Activated T-helper 1 cell treated with anti-CD3 and anti-CD28 coated beads, Interleukin-12 subunit alpha, Interleukin-12 subunit beta, Interleukin-2, Interleukin-4 antibody, amounts not matched to agents 30 ng/mL and 10 ng/mL and 1 ng/mL, durations not matched to agents 14 hours and 24 hours and 36 hours (primary cell): ENCODE measurements at regions of chr1 and their contacts with region 1.

Region 1: GRCh38 chr1:167803358-167804207 is 81.8 kb downstream of the MPZL1 start:
- DNase-seq: peak; percentile 84
- H3K4me3 Mint-ChIP-seq: peak overlapping the region; percentile 58
- H3K27ac Mint-ChIP-seq: peak overlapping the region; percentile 87
- H3K4me1 Mint-ChIP-seq: peaks cover 41% of the 10 kb centered on the region
- H3K27me3 Mint-ChIP-seq: no peaks in the 10 kb centered on the region

Region 2: GRCh38 chr1:167553136-167554027 is 250.2 kb before region 1 on chr1 and contains the start of gene CREG1:
- intact Hi-C with region 1: loop called (anchors 5 kb)
- DNase-seq: peak; percentile 89
- H3K4me3 Mint-ChIP-seq: peak within 1 kb of the TSS; percentile 86
- H3K27ac Mint-ChIP-seq: peak within 1 kb of the TSS; percentile 4
- H3K4me1 Mint-ChIP-seq: peaks cover 40% of the 10 kb centered on the region
- H3K27me3 Mint-ChIP-seq: peaks cover 1% of the 10 kb centered on the region
- total RNA-seq, gene CREG1: 15.3 and 16.8 TPM in 2 replicates

Region 3: DNA sequence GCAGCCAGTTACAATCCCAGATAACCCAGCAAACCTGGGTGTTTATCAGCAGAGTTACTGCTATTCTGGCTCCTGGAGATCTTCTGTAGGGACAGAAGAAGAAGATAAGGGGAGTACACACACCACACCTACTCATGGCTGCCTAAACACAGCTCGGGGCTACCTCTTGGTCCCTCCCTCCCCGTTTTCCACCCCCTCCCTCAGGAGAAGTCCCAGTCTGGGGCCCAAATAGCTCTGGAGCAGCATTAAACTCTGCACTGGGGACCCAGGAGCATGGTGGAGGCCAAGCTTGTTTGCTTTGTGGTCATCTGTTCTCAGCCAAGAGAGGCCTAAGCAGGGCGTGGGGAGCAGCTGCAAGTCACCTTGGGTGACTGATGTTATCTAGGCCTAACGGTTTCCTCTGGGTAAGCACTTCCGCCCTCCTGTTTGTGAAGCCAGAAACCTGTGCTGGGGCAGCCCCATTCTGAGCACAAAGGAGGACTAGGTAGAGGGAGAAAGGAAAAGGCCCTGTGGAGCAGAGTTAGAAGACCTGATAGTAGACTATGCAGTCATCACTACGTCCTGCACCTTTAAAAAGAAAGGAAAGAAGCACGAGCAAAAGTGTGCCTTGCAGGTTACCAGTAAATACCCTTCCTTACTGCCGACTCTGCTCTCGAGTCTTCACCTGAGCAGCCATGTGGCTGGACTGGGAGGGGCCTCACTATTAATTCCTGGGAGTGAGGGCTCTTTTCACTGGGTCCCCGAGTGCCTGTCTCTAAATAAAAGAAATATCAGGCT is 175.5 kb before region 1 on chr1:
- intact Hi-C with region 1: loop called (anchors 1 kb)
- DNase-seq: peak; percentile 82
- H3K4me3 Mint-ChIP-seq: peak overlapping the region; percentile 85
- H3K27ac Mint-ChIP-seq: peak overlapping the region; percentile 89
- H3K4me1 Mint-ChIP-seq: peaks cover 70% of the 10 kb centered on the region
- H3K27me3 Mint-ChIP-seq: no peaks in the 10 kb centered on the region

Region 4: GRCh38 chr1:167715157-167715999 is 88.2 kb before region 1 on chr1:
- intact Hi-C with region 1: loop called (anchors 1 kb)
- DNase-seq: peak; percentile 84
- H3K4me3 Mint-ChIP-seq: peak overlapping the region; percentile 96
- H3K27ac Mint-ChIP-seq: peak overlapping the region; percentile 91
- H3K4me1 Mint-ChIP-seq: peaks cover 61% of the 10 kb centered on the region
- H3K27me3 Mint-ChIP-seq: peaks cover 21% of the 10 kb centered on the region

Region 5: GRCh38 chr1:167776151-167776550 is 27.4 kb before region 1 on chr1:
- intact Hi-C with region 1: loop called (anchors 1 kb)
- DNase-seq: no peak
- H3K4me3 Mint-ChIP-seq: peak overlapping the region; percentile 23
- H3K27ac Mint-ChIP-seq: peak overlapping the region; percentile 38
- H3K4me1 Mint-ChIP-seq: peaks cover 46% of the 10 kb centered on the region
- H3K27me3 Mint-ChIP-seq: no peaks in the 10 kb centered on the region

Region 6: GRCh38 chr1:168082008-168082876 is 278.7 kb after region 1 on chr1:
- intact Hi-C with region 1: loop called (anchors 1 kb)
- DNase-seq: peak; percentile 53
- H3K4me3 Mint-ChIP-seq: no peak overlapping the region
- H3K27ac Mint-ChIP-seq: no peak overlapping the region
- H3K4me1 Mint-ChIP-seq: peaks cover 13% of the 10 kb centered on the region
- H3K27me3 Mint-ChIP-seq: peaks cover 3% of the 10 kb centered on the region